ENCODE measurements at regions of chr15 and their contacts with region 1.

Region 1: GRCh38 chr15:65516997-65517865 is at the start of gene DPP8:
- DNase-seq: peak; percentile 38
- H3K4me3 ChIP-seq: peak within 1 kb of the TSS; percentile 99
- H3K27me3 ChIP-seq: no peaks in the 10 kb centered on the region
- CTCF ChIP-seq: peak; percentile 99
- polyA plus RNA-seq, gene DPP8: 21.6 and 29.0 TPM in 2 replicates

Region 2: GRCh38 chr15:64430000-64430735 is 1087.1 kb before region 1 on chr15:
- CTCF ChIA-PET with region 1: no interaction called
- POLR2A ChIA-PET with region 1: interaction called, 20 read pairs
- DNase-seq: peak; percentile 77
- H3K4me3 ChIP-seq: no peak overlapping the region
- H3K27me3 ChIP-seq: no peaks in the 10 kb centered on the region
- CTCF ChIP-seq: no peak

Region 3: GRCh38 chr15:64905119-64905831 is 612.0 kb before region 1 on chr15:
- CTCF ChIA-PET with region 1: no interaction called
- POLR2A ChIA-PET with region 1: no interaction called
- DNase-seq: no peak
- H3K4me3 ChIP-seq: peak overlapping the region; percentile 7
- H3K27me3 ChIP-seq: no peaks in the 10 kb centered on the region
- CTCF ChIP-seq: peak; percentile 87

Measured in BJ (cell line).